GM10248 (cell line): ENCODE measurements at regions of chr4 and their contacts with region 1.

Region 1: DNA sequence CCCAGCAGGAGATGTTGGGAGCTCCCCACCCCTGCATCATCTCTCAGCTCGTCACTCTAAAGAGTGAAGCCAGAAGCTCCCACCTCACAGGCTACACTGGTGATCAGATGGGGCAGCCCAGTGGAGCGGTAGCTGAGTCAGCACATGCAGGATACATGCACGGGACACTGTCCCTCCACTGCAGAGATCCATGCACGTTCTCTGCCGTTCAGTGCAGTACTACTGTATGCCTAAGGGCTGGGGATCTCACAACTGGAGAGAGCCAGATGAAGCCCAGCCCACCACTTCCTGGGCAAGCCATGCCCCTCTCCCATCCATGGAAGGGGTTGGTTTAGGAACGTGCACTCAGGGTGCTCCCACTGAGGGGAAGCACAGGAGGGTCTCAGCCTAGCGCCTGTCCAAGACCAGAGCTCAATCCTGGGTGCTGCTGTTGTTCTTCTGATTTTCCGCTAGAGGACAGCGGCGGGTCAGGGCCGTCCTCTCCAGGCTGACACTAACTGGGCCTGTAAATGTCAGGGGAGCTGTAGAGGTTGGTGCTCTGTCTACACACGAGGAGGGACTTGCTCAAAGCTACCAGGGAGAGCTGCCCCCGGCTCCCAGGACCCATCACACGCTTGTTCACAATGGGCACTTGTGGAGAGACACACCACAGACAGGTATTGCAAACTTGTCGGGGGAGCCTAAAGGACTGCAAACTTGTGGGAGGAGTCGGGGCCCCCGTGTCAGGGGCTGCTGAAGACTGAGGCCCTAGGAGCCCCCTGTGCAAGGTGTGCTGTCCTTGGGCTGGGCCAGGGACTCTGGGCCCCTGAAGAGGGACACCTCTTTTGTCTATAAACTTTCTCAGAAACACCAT is 18.2 kb upstream of the ABLIM2 start:
- DNase-seq: peak; percentile 82
- CTCF ChIP-seq: peak; percentile 94

Region 2: DNA sequence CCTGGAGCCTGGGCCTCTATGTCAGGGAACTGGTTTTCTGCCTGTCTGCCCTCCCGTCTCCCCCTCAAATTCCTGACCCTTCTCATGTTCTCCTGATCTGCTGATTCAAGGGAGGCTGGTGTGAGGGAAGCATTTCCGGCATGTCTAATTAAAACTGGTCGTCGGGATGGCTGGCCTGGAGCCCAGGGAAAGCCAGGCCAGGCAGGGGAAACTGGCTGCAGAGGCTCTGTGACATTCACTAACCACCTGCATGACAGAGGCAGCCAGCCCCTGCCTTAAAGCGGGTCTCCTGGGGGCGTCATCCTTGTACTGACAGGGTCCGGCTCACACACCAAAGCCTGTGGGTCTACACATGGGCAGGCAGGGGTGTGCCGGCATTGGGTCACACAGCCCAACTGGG is 53.4 kb before region 1 on chr4:
- CTCF ChIA-PET with region 1: no interaction called
- POLR2A ChIA-PET with region 1: no interaction called
- DNase-seq: no peak
- CTCF ChIP-seq: no peak

Region 3: DNA sequence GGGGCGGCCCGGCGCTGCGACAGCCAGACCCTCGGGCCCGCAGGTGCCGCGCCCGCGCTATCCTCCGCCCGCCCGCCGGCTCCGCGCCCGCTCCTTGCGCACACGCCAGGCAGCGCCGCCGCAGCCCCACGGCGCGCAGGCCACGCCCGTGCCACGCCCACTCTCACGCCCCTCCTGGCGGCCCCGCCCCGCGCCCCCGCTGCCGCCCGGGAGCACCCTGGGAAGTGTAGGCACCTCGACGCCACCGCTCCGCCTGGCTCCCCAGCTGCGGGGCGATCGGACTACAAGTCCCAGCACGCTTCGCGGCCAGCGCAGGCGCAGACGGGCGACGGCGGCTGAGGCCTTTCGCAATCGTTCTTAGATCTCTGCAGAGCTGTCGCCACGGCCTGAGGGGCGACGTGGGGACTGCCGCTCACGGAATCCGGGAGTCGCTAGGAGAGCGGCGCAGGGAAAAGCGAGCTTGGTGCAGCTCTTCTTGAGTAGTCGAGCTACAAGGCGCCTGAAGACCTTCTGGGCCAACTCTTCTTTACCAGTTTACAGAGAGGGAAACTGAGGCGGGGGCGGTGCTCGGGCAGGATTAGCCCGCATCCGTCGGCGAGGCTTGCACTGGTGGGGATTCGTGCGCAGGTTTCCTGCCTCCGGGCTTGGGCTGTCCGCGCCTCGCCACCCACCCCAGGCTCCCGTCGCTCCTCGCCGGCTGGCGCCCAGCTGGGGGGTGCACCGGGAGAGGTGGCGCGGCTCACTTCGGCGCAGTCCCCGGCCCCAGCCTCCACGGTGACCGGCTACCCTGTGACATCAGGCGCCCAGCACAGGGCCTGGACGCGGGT is 17.9 kb before region 1 on chr4 and contains the start of gene ABLIM2:
- CTCF ChIA-PET with region 1: interaction called, 12 read pairs
- POLR2A ChIA-PET with region 1: no interaction called
- DNase-seq: peak; percentile 100
- CTCF ChIP-seq: no peak

Region 4: GRCh38 chr4:8198906-8199593 is 22.3 kb after region 1 on chr4 and contains the start of gene SH3TC1:
- CTCF ChIA-PET with region 1: interaction called, 83 read pairs
- POLR2A ChIA-PET with region 1: no interaction called
- DNase-seq: peak; percentile 91
- CTCF ChIP-seq: no peak

Region 5: DNA sequence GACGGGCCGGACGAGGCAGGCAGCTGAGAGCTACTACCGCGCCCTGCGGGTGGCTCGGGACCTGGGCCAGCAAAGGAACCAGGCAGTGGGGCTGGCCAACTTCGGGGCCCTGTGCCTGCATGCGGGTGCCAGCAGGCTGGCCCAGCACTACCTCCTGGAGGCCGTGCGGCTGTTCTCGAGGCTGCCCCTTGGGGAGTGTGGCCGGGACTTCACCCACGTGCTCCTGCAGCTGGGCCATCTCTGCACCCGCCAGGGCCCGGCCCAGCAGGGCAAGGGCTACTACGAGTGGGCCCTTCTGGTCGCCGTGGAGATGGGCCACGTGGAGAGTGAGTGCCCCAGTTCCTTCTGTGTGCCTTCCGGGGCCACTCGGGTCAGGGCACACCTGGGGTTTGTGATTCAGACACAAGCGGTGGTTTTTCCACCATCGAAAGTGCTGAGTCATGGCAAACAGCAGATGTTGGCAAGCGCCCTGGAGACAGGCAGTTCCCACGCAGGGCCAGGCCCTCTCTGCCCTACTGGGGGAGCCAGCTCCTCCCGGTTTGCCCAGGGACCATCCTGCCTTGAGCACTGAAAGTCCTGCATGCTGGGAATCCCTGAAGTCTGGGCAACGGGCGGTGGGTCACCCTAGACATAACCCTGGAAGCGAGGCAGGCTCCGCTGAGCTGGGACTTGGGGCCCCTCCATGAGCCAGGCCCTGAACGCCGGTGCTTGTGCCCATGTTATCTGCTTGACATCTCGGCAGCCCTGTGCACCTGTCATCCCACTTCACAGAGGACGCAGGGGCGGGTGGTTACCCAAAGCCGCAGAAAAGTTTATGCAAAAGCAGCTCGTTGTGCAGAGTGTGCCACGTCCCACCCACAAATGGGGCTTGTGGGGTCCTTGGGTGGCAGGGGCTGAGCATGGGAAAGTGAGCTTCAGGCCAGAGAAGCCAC is 51.8 kb after region 1 on chr4:
- CTCF ChIA-PET with region 1: interaction called, 11 read pairs
- POLR2A ChIA-PET with region 1: no interaction called
- DNase-seq: peak; percentile 71
- CTCF ChIP-seq: no peak

Region 6: GRCh38 chr4:8403173-8403753 is 226.5 kb after region 1 on chr4:
- CTCF ChIA-PET with region 1: interaction called, 26 read pairs
- POLR2A ChIA-PET with region 1: no interaction called
- DNase-seq: peak; percentile 78
- CTCF ChIP-seq: peak; percentile 80